ENCODE measurements at regions of chr1 and their contacts with region 1.

Region 1: GRCh38 chr1:109099938-109100773 is 9.6 kb downstream of the TMEM167B start:
- H3K4me3 ChIP-seq: peak overlapping the region; percentile 82
- H3K27ac ChIP-seq: peak overlapping the region; percentile 86
- H3K4me1 ChIP-seq: no peaks in the 10 kb centered on the region
- CTCF ChIP-seq: peak; percentile 91

Region 2: GRCh38 chr1:108624055-108624454 is 476.1 kb before region 1 on chr1:
- CTCF ChIA-PET with region 1: no interaction called
- POLR2A ChIA-PET with region 1: no interaction called
- H3K4me3 ChIP-seq: no peak overlapping the region
- H3K27ac ChIP-seq: no peak overlapping the region
- H3K4me1 ChIP-seq: no peaks in the 10 kb centered on the region
- CTCF ChIP-seq: no peak

Region 3: GRCh38 chr1:108767115-108767514 is 333.0 kb before region 1 on chr1:
- CTCF ChIA-PET with region 1: no interaction called
- POLR2A ChIA-PET with region 1: no interaction called
- H3K4me3 ChIP-seq: no peak overlapping the region
- H3K27ac ChIP-seq: no peak overlapping the region
- H3K4me1 ChIP-seq: no peaks in the 10 kb centered on the region
- CTCF ChIP-seq: no peak

Region 4: DNA sequence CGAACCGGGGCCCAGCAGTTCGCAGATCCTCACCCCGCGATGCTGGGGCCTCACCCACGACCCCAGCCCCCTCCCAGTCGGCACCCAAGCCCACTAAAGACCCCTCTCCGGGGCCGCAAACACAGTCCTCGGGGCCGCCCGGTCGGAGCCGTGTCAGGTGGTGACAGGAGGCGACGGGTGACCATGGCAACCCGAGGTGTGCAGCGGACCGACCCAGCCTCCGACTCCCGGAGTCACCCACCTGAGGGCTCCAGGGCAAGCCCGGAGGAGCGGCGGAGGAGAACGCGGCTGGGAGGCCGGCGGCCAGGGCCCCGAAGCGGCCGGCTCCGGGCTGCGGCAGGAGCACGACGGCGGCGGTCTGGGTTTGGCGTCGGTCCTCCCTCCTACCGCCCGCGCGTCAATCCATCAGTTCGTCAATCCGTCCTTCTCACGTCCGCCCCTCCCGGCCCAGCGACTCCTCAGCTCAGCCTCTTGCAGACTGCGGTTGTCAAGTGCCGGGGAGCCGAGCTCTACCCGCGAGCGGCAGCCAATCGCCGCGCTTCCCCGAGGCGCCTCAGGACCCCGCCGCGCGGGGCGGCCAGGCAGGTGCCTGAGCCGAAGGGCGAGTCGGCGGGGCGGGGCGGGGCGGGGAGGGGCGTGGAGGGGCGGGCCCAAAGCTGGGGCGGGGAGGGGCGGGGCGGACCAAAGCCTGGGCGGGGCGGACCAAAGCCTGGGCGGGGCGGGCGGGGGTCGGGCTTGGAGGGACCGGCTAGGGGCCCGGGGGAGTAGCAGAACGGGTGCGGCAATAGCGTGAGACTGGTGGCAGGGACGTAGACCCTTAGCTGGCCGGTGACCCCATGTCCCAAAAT is 58.3 kb before region 1 on chr1 and contains the start of gene WDR47:
- CTCF ChIA-PET with region 1: interaction called, 6 read pairs
- POLR2A ChIA-PET with region 1: interaction called, 43 read pairs
- H3K4me3 ChIP-seq: peak within 1 kb of the TSS; percentile 85
- H3K27ac ChIP-seq: peak within 1 kb of the TSS; percentile 75
- H3K4me1 ChIP-seq: no peaks in the 10 kb centered on the region
- CTCF ChIP-seq: no peak; the same call in 1 of the 2 replicates

Region 5: GRCh38 chr1:109083923-109084322 is 16.2 kb before region 1 on chr1:
- CTCF ChIA-PET with region 1: interaction called, 5 read pairs
- POLR2A ChIA-PET with region 1: interaction called, 20 read pairs
- H3K4me3 ChIP-seq: no peak overlapping the region
- H3K27ac ChIP-seq: no peak overlapping the region
- H3K4me1 ChIP-seq: no peaks in the 10 kb centered on the region
- CTCF ChIP-seq: no peak

Region 6: GRCh38 chr1:109181105-109181806 is 81.1 kb after region 1 on chr1:
- CTCF ChIA-PET with region 1: no interaction called
- POLR2A ChIA-PET with region 1: interaction called, 10 read pairs
- H3K4me3 ChIP-seq: no peak overlapping the region
- H3K27ac ChIP-seq: peak overlapping the region; percentile 46; the same call in 1 of the 2 replicates
- H3K4me1 ChIP-seq: peaks cover 3% of the 10 kb centered on the region
- CTCF ChIP-seq: no peak

Region 7: GRCh38 chr1:109213785-109214468 is 113.8 kb after region 1 on chr1 and contains the start of gene SARS1:
- CTCF ChIA-PET with region 1: interaction called, 3 read pairs
- POLR2A ChIA-PET with region 1: interaction called, 19 read pairs
- H3K4me3 ChIP-seq: peak within 1 kb of the TSS; percentile 89
- H3K27ac ChIP-seq: peak within 1 kb of the TSS; percentile 56
- H3K4me1 ChIP-seq: peaks cover 3% of the 10 kb centered on the region; the same call in 1 of the 2 replicates
- CTCF ChIP-seq: no peak